AG04450 (cell line): ENCODE measurements at regions of chr5 and their contacts with region 1.

Region 1: DNA sequence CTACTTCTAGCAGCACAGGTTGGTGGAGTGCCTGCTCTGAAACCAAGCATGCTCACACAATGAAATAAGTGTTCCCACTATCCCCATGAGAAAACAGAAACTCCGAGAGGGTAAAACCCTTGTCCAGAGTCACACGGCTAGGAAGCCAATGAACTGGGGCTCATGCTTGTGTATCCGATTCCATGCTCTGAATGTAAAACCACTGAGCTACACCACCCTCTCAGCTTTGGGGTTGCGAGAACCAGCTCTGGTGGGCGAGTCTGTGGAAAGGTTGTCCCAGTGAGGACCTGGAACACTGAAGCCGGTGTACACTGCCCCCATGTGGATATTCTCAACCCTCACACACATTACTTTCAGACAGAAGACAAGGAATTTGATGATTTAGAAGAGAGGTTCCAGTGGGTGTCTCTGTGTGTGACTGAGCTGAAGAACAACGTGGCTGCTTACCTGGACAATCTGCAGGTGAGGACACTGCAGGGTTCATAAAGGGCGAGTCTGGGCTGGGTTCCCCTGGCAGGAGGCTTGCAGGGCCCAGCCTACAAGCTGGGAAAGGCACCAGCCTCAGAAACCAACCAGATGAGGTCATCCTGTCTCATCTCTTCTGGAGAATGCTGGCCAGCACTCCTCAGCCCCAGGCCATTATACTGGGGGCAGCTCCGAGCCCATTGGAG is 37.4 kb downstream of the ARHGEF37 start:
- DNase-seq: peak; percentile 24
- H3K4me3 ChIP-seq: no peak overlapping the region
- H3K27ac ChIP-seq: no peak overlapping the region
- H3K27me3 ChIP-seq: peaks cover 13% of the 10 kb centered on the region
- CTCF ChIP-seq: peak; percentile 79

Region 2: DNA sequence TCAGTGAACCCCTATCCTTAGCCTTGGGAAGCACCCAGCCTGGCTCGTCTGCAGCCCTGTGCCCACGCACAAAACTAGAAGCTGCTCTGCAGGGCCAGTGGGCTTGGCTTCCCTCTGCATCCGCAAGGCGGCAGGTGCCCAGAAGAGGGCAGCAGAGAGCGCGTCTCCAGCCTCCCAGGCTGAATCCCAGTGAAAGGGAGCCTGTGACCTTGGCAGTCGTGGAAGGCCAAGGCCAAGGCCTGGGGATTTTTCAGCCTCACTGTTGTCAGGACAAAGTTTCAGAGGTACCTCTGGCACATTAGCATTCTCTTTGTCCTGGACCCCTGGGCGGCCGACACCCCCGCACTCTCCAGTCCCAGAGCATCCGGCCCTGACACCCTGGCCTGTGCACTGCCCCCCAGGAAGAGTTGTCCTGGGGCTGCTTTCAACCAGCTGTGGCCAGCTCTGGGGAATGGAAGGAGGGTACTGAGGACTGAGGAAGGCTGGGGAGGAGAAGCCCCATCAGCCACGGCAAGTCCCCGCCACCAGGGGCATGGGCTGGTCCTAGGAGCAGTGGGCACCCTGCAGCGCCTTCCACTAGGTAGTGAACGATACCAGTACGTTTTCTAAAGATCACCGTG is 176.0 kb before region 1 on chr5:
- CTCF ChIA-PET with region 1: interaction called, 18 read pairs
- POLR2A ChIA-PET with region 1: no interaction called
- DNase-seq: peak; percentile 44
- H3K4me3 ChIP-seq: no peak overlapping the region
- H3K27ac ChIP-seq: peak overlapping the region; percentile 0
- H3K27me3 ChIP-seq: peaks cover 2% of the 10 kb centered on the region
- CTCF ChIP-seq: peak; percentile 93

Region 3: GRCh38 chr5:149567226-149567625 is 51.5 kb before region 1 on chr5:
- CTCF ChIA-PET with region 1: interaction called, 14 read pairs
- POLR2A ChIA-PET with region 1: interaction called, 4 read pairs
- DNase-seq: no peak
- H3K4me3 ChIP-seq: no peak overlapping the region
- H3K27ac ChIP-seq: no peak overlapping the region
- H3K27me3 ChIP-seq: no peaks in the 10 kb centered on the region
- CTCF ChIP-seq: no peak

Region 4: DNA sequence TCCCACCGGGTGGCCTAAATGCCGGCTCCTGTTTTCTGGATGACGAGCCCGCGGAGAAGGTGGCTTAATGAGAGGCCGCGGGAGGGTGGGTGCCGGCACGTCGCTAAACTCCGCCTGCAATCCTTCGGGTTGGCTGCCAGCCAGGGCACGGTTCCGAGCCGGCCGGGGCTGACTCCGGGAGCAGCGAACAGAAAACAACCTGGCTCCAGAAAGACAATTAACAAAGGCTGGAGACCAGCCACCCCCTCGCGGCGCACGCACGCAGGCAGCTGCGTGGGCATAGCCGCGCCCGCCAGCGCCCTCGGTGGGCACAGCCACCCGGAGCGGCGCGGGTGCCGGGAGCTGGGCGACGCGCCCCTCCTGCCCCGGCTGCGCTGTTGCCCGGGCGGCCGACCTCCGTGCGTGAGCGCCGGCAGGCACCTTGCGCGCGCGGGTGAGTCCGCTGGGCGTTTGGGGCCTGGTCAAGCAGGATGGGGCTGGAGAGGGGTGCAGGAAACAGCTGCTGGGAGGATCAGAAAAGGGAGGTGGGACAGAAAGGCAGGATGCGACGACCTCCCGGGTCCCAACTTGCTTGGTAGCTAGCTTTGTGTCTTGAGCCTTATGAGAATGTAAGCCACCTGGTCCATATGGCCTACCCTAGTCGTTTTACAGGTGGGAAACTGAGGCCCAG is 37.4 kb before region 1 on chr5 and contains the start of gene ARHGEF37:
- CTCF ChIA-PET with region 1: interaction called, 14 read pairs
- POLR2A ChIA-PET with region 1: no interaction called
- DNase-seq: no peak
- H3K4me3 ChIP-seq: peak within 1 kb of the TSS; percentile 49
- H3K27ac ChIP-seq: no peak within 1 kb of the TSS
- H3K27me3 ChIP-seq: no peaks in the 10 kb centered on the region
- CTCF ChIP-seq: no peak
- polyA plus RNA-seq, gene ARHGEF37: 0.61 and 0.74 TPM in 2 replicates

Region 5: DNA sequence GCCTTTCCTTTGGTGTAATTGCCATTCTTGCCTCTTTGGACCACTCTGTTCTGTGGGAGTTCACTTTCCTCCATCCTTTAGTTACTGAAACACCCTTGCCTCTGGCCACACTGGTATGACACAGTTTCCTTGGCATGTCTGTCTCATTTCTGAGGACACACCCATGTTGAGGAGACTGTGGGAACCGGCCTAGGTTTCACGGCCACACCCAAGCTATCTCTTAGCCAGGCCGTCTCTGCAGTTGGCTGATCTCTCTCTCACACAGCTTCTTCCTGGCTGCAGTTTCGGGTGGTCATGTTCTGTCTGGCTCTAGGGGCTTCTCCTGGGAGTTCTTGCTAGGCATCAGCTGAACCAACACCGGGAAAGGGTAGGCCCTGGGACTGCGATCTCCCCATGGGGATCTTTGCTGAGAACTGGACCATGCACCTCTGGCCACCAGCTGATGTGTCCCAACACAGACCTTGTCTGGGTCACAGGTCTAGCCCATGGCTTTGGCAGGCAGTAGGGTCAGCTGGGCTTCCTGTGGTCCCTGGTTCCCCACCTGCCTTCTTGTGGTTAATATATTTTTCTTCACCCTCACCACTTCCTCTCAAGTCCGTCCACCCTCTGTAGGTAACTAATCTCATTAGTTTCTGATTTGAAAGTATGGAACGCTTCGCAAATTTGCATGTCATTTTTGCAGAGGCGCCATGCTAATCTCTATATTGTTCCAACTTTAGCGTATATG is 12.6 kb before region 1 on chr5:
- CTCF ChIA-PET with region 1: interaction called, 33 read pairs
- POLR2A ChIA-PET with region 1: no interaction called
- DNase-seq: no peak
- H3K4me3 ChIP-seq: no peak overlapping the region
- H3K27ac ChIP-seq: no peak overlapping the region
- H3K27me3 ChIP-seq: peaks cover under 1% of the 10 kb centered on the region
- CTCF ChIP-seq: no peak